GM13977 (cell line): ENCODE measurements at regions of chr20 and their contacts with region 1.

Region 1: GRCh38 chr20:16761305-16761829 is 13.2 kb downstream of the OTOR start:
- DNase-seq: peak; percentile 43
- CTCF ChIP-seq: peak; percentile 77

Region 2: DNA sequence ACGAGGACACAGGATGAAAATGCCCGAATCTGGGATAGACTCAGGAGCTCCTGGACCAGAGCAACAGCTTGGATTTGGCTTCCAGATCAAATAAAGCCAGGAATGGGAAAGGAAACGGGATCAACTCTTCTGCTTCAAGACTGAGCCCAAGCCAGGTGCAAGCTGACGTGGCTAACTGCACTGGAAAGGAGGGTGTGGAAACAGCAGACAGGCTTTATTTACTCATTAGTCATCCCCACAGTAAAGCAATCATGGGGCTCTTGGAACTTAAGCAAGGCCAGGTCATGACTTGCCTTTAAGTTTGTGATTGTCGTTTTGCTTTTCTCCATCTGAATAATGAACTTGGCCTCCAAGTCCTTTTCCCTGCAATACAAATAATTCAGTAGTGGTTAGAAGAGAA is 233.3 kb before region 1 on chr20:
- in situ Hi-C with region 1: loop called (anchors 25 kb)
- DNase-seq: no peak
- CTCF ChIP-seq: no peak

Region 3: GRCh38 chr20:16647875-16648597 is 113.3 kb before region 1 on chr20:
- in situ Hi-C with region 1: no loop called
- DNase-seq: no peak
- CTCF ChIP-seq: no peak